GM10248 (cell line): ENCODE measurements at regions of chr22 and their contacts with region 1.

Region 1: GRCh38 chr22:31790240-31790639 is 36.4 kb downstream of the DEPDC5 start:
- DNase-seq: peak; percentile 57
- CTCF ChIP-seq: no peak

Region 2: GRCh38 chr22:32487461-32487860 is 697.2 kb after region 1 on chr22:
- CTCF ChIA-PET with region 1: no interaction called
- POLR2A ChIA-PET with region 1: interaction called, 10 read pairs
- DNase-seq: no peak
- CTCF ChIP-seq: no peak